ENCODE measurements at regions of chr20 and their contacts with region 1.

Region 1: DNA sequence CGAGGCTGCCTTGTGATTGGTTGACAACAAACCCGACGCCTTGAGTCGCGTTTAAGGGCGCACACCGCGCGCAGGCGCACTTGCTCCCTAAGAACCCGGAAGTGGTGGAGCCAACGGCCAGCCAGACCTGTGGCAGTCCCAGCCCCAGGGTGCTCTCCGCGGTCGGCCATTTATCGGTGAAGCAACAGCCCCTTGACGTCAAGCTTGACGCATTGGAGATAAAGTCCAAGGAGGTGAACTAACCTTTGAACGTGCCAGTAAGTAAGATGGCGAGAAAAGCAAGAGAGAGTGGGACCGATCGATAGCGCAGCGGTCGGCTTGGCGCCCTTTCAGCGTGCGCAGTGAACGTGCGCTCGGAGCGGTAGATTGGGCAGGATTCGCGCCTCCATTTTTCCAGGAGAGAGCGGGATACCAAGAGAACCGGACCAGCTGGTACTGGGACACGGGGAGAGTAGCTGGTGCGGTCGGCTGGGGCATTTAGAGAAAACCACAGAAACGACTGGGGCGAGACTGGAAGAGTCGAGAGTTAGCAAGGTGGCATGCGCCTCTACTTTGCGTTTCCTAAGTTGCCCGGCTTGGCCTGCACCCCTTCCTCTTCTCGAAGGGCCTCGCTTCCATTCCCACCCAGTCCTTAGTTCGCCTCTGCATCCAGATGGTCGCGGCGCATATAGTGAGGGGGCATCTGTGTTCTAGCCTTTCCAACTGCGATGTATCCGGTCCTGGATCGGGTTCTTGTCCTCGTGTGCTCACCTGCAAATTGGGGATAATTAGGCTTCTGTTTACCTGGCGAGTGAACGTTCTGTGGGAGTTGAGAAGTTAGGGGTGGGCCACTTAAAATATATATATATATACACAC is at the start of gene CSTF1:
- DNase-seq: peak; percentile 100
- ATAC-seq: peak; percentile 100
- H3K4me3 ChIP-seq: peak within 1 kb of the TSS; percentile 52 to 100
- H3K27ac ChIP-seq: peak within 1 kb of the TSS in 1 of 2 donors; percentile 97
- H3K4me1 ChIP-seq: peaks cover 0 to 3% of the 10 kb centered on the region in 2 donors
- H3K27me3 ChIP-seq: no peaks in the 10 kb centered on the region
- total RNA-seq, gene CSTF1: 16.8 to 21.7 TPM

Region 2: DNA sequence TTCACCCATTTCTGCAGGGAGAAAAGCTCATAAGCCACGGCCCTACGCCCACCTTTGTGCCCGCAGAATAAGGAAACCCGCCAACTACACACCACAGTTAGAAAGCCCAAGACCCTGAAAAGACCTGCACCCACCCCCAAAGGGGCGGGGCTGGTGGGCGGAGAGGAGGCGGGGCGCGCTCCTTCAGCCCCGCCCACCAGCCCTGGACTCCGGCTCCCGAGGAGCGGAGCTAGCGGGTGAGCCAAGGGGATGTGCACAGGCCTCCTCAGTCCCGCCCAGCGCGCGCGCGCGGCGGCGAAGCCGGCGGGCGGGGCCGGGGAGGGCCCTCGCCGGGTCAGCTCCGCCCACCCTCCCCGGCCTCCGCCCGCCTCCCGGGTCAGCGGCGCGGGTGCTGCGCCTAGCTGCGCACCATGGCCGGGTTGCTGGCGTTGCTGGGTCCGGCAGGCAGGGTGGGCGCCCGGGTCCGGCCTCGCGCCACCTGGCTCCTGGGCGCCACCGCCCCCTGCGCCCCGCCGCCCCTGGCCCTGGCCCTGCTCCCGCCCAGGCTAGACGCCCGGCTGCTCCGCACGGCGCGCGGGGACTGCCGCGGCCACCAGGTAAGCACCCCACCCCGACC is 33.8 kb before region 1 on chr20 and contains the start of gene FAM210B:
- intact Hi-C with region 1: loop called (anchors 1 to 2 kb)
- DNase-seq: peak; percentile 93 to 95
- ATAC-seq: peak; percentile 96
- H3K4me3 ChIP-seq: peak within 1 kb of the TSS; percentile 83 to 90
- H3K27ac ChIP-seq: peak within 1 kb of the TSS in 1 of 2 donors; percentile 18
- H3K4me1 ChIP-seq: no peaks in the 10 kb centered on the region
- H3K27me3 ChIP-seq: no peaks in the 10 kb centered on the region
- total RNA-seq, gene FAM210B: 35.0 to 42.0 TPM

Region 3: DNA sequence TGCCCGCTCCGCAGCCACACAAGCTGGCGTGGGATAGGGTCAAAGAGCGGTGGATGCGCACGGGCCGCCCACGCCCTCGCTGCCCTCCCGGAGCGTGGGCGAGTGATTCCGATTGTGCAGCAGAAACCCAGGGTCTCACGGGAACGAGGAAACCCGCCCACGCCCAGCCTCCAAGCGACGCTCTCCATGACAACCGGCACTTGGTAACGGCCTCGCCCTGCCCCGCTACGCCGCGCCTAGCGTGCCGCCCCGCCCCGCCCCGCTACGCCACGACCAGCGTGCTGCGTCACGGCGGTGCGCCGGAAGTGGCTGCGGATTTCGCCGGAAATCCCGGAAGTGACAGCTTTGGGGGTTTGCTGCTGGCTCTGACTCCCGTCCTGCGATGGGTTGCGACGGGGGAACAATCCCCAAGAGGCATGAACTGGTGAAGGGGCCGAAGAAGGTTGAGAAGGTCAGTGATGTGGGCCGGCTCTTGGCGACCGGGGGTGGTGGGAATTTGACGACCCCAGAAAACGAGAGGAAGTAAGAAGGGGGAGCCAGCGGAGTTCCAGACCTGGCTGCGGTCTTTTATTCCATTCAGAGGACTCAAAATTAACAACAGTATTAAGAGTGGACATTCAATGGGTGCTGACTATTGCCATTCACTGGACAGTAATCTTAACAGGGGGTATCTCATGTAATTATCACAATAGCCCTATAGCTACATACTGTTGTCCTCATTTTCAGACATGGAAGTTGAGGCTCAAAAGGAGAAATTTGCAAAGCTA is 76.0 kb after region 1 on chr20 and contains the start of gene RTF2:
- intact Hi-C with region 1: loop called (anchors 2 to 5 kb)
- DNase-seq: peak; percentile 96 to 98
- ATAC-seq: peak; percentile 99
- H3K4me3 ChIP-seq: peak within 1 kb of the TSS; percentile 88 to 91
- H3K27ac ChIP-seq: peak within 1 kb of the TSS in 1 of 2 donors; percentile 46
- H3K4me1 ChIP-seq: peaks cover 2 to 11% of the 10 kb centered on the region in 2 donors
- H3K27me3 ChIP-seq: no peaks in the 10 kb centered on the region
- total RNA-seq, gene RTF2: 68.1 to 72.6 TPM